Activated CD4-positive, alpha-beta T cell treated with anti-CD3 and anti-CD28 coated beads for 36 hours (primary cell): ENCODE measurements at regions of chr10 and their contacts with region 1.

Region 1: DNA sequence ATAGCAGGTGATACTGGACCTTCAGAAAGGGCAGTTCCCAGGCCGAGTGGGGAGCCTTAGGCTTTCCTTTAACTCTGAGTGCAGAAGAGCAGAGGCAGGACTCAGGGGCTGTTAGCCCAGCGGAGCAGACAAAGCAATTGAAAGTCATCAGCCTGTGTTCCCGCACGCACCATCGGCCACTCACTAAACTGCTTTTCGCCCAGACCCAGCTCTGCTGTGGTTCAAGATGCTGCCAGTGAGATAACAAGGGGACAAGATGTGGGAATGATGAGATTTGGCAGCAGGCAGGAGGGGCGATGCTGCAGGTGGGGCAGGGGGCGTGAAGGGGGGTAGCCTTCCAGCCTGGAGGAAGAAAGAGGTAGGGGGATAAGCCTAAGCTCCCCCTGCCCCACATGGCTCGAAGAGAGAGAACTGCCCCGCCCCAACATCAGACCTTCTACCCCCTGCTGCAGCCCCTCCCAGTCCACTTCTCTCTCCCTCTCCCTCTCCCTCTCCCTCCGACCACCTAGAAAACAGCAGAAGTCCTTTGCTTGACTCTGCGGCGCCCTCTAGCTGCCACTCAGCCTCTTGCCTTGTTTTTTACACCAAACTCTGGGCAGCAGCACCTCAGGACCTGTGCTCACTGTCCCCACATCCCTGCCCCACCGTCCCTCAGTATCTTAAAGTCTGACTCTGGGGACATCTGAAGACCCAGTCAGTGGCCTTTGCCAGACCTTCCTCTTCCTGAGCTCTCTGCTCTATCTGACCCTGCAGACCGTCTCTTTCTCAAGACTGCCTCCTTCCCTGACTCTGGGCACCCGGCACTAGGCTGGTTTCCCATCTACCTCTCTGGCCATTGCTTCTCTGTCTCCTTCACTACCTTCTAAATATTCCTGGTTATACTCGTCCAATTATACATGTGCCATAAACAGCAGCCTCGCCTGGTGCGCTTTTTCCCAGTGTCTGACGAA is 110.5 kb downstream of the C10orf105 start:
- DNase-seq: peak; percentile 86
- ATAC-seq: peak; percentile 71
- H3K4me3 Mint-ChIP-seq: no peak overlapping the region
- H3K27ac Mint-ChIP-seq: no peak overlapping the region
- H3K4me1 Mint-ChIP-seq: peaks cover 2% of the 10 kb centered on the region
- H3K27me3 Mint-ChIP-seq: no peaks in the 10 kb centered on the region

Region 2: DNA sequence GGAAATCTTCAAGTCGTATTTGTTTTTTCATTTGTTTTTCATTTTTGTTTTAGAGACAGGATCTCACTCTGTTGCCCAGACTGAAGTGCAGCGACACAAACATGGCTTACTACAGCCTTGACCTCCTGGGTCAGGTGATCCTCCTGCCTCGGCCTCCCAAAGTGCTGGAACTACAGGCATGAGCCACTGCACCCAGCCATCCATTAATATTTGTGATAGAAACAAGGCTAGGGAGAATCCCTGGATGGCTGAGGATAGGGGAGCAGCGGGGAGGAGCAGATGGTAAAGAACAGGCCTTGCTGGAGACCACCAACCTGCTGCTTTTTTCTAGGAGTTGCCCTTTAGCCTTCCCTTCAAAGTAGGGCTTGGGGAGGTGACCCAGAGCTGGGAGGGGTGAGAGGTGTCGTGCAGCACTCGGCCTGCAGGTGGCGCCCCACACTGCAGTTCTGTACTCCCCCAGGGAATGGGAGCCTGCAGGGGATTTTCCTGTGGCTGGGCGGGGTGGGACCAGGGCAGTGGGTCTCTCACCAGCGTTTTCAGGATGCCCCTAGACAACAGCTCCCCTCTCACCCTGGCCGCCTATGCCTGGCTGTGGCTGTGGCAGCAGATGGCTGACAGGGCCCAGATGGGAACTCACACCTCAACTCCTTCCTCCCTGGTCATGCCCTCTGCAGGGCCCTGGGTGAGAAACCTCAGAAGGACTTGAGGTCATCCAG is 225.0 kb before region 1 on chr10:
- CTCF ChIA-PET with region 1: interaction called, 3 read pairs
- POLR2A ChIA-PET with region 1: no interaction called
- intact Hi-C with region 1: loop called (anchors 1 to 5 kb)
- DNase-seq: peak; percentile 87
- ATAC-seq: peak; percentile 95
- H3K4me3 Mint-ChIP-seq: no peak overlapping the region
- H3K27ac Mint-ChIP-seq: no peak overlapping the region
- H3K4me1 Mint-ChIP-seq: no peaks in the 10 kb centered on the region
- H3K27me3 Mint-ChIP-seq: no peaks in the 10 kb centered on the region

Region 3: DNA sequence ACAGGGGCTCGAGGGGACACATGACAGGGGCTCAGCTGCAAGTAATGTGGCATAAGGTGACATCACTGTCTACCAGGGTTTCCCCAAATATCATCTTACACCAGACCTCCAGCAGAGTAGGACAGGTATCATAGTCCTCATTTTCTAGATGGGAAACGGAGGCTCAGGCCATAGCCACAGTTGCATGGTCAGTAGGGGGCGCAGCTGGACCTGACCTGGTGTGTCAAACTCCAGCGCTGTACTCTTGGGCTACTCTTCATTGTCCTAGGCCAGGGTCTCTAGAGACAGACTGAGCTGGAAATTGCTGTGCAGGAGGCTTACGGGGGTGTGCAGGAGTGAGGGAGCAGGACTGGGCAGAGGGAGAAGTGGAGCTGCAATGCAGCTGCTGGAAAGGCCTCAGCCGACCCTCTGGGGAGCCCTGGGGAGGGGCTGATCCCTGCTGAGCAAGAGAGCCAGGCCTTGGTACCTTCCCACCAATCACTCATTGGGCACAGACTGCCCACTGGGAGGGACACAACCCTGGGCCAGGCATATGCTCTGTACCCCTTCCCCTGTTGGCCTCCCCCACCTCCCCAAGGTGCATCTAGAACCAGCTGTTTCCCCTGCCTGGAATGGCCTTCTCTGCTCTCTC is 122.5 kb before region 1 on chr10:
- CTCF ChIA-PET with region 1: interaction called, 3 read pairs
- POLR2A ChIA-PET with region 1: no interaction called
- intact Hi-C with region 1: loop called in 1 of 2 experiments (anchors 1 kb)
- DNase-seq: peak; percentile 81
- ATAC-seq: peak; percentile 64
- H3K4me3 Mint-ChIP-seq: no peak overlapping the region
- H3K27ac Mint-ChIP-seq: no peak overlapping the region
- H3K4me1 Mint-ChIP-seq: no peaks in the 10 kb centered on the region
- H3K27me3 Mint-ChIP-seq: peaks cover 4% of the 10 kb centered on the region